CD4-positive, alpha-beta memory T cell (primary cell): ENCODE measurements at regions of chr18 and their contacts with region 1.

Region 1: DNA sequence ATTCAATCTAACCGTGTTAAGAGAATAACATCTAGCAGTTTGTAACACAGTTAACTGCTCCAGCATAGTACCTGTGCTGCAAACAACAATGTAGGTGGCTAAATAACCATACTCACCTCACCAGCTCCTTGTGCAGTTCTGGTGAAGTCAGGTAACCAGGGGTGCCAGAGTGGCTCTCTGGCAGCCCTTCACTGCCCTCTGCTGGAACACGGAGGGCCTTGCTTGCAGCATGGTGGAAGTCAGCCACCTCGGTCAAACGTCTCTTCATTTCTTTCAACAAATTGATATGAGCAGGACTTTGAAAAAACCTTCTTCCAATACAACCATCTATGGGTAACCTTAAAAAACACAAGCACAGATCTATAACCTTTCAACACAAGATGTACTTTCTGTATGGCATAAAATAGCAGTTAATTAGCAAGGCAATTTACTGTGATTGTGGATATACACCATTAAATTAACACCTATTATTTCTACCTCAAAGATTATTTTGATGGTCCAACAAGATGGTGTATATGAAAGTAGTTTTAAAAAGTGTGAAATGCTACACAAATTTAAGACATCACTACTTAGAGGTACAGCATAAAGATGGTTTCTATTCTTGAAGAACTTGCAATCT is 56.6 kb downstream of the EPG5 start:
- DNase-seq: peak; percentile 45 to 61 (median 57)
- H3K4me3 ChIP-seq: no peak overlapping the region
- H3K4me3 Mint-ChIP-seq: no peak overlapping the region
- H3K27ac ChIP-seq: no peak overlapping the region
- H3K27ac Mint-ChIP-seq: peak overlapping the region in 2 of 7 donors; percentile 12 to 70
- H3K4me1 ChIP-seq: no peaks in the 10 kb centered on the region
- H3K4me1 Mint-ChIP-seq: peaks cover 0 to 6% (median 4%) of the 10 kb centered on the region in 4 donors
- H3K27me3 ChIP-seq: no peaks in the 10 kb centered on the region
- H3K27me3 Mint-ChIP-seq: no peaks in the 10 kb centered on the region

Region 2: DNA sequence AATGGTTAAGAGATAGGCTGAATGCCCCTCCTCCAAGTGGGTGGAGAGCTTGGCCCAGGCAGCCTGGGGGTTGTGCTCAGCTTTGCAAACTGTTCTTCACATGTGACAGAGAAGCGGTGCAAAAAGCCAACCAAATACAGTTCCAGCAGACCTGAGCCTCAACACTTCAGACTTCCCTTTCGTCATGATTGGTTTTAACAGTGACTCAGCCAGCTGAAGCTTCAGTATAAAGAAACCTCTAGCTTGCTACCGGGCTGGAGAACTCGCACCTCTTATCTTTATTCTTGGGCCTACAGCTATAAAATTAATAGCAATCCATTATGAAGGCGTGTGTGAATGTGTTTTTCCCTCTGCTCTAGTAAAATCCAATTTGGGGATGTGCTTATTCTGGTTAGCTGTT is 1209.9 kb before region 1 on chr18:
- CTCF ChIA-PET with region 1: no interaction called
- POLR2A ChIA-PET with region 1: no interaction called
- intact Hi-C with region 1: no loop called
- DNase-seq: no peak
- H3K4me3 ChIP-seq: no peak overlapping the region
- H3K4me3 Mint-ChIP-seq: no peak overlapping the region
- H3K27ac ChIP-seq: no peak overlapping the region
- H3K27ac Mint-ChIP-seq: no peak overlapping the region
- H3K4me1 ChIP-seq: no peaks in the 10 kb centered on the region
- H3K4me1 Mint-ChIP-seq: peaks cover 0 to 4% (median 3%) of the 10 kb centered on the region in 4 donors
- H3K27me3 ChIP-seq: no peaks in the 10 kb centered on the region
- H3K27me3 Mint-ChIP-seq: no peaks in the 10 kb centered on the region

Region 3: DNA sequence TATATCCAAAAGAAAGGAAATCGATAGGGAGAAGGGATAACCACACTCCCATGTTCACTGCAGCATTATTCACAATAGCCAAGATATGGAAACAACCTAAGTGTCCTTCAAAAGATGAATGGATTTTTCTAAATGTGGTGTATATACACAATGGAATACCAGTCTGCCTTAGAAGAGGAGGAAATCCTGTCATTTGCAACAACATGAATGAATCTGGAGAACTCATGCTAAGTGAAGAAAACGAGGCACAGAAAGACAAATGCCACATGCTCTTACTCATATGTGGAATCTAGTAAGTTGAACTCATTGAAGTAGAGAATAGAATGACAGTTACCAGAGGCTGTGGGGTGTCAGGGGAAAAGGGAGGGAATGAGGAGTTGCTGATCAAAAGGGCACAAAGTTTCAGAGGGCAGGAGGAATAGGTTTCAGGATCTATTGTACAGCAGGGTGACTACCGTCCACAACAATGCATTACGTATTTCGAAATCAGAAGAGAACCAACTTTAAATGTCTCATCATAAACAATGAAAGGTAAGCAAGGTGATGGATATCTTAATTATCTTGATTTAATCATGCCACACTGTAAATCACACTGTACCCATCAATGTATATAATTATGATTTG is 39.0 kb before region 1 on chr18:
- CTCF ChIA-PET with region 1: no interaction called
- POLR2A ChIA-PET with region 1: no interaction called
- intact Hi-C with region 1: no loop called
- DNase-seq: no peak
- H3K4me3 ChIP-seq: no peak overlapping the region
- H3K4me3 Mint-ChIP-seq: peak overlapping the region in 1 of 8 donors; percentile 11
- H3K27ac ChIP-seq: no peak overlapping the region
- H3K27ac Mint-ChIP-seq: peak overlapping the region in 3 of 7 donors; percentile 10 to 69 (median 18)
- H3K4me1 ChIP-seq: peaks cover 24% of the 10 kb centered on the region
- H3K4me1 Mint-ChIP-seq: peaks cover 17 to 28% (median 26%) of the 10 kb centered on the region in 4 donors
- H3K27me3 ChIP-seq: no peaks in the 10 kb centered on the region
- H3K27me3 Mint-ChIP-seq: no peaks in the 10 kb centered on the region

Region 4: GRCh38 chr18:45967007-45967706 is 56.6 kb after region 1 on chr18 and contains the start of gene EPG5:
- CTCF ChIA-PET with region 1: no interaction called
- POLR2A ChIA-PET with region 1: no interaction called
- intact Hi-C with region 1: loop called (anchors 5 kb)
- DNase-seq: peak; percentile 89 to 94 (median 91)
- H3K4me3 ChIP-seq: peak within 1 kb of the TSS; percentile 89 to 94
- H3K4me3 Mint-ChIP-seq: peak within 1 kb of the TSS; percentile 95 to 100 (median 98)
- H3K27ac ChIP-seq: peak within 1 kb of the TSS; percentile 72
- H3K27ac Mint-ChIP-seq: peak within 1 kb of the TSS; percentile 89 to 98 (median 97)
- H3K4me1 ChIP-seq: peaks cover 48% of the 10 kb centered on the region
- H3K4me1 Mint-ChIP-seq: peaks cover 31 to 55% (median 42%) of the 10 kb centered on the region in 4 donors
- H3K27me3 ChIP-seq: no peaks in the 10 kb centered on the region
- H3K27me3 Mint-ChIP-seq: no peaks in the 10 kb centered on the region
- total RNA-seq, gene EPG5: 64.3 to 69.0 TPM

Region 5: DNA sequence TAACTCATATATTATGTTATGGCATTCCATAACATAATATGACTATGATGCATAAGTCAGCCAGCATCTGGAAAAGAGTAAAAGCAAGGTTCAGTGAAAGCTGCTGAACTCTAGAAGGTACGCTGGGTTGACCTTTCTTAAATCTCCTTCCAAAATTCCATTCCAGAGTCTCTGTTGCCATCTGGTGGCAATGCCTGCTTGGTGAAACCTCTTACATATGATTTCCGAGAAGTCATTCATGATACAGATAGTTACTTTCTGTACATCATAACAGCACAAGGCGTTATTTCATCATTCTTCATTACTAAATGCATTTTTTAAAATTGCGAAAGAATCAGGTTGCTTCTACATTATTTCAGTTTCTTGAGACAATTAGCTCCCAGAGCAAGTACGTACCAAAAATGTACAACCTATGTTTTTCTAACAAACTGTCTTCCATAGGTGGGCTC is 63.6 kb after region 1 on chr18:
- CTCF ChIA-PET with region 1: interaction called, 3 read pairs
- POLR2A ChIA-PET with region 1: no interaction called
- intact Hi-C with region 1: loop called (anchors 2 kb)
- DNase-seq: peak; percentile 60 to 80 (median 66)
- H3K4me3 ChIP-seq: no peak overlapping the region
- H3K4me3 Mint-ChIP-seq: peak overlapping the region in 3 of 8 donors; percentile 0 to 34 (median 1)
- H3K27ac ChIP-seq: no peak overlapping the region
- H3K27ac Mint-ChIP-seq: no peak overlapping the region
- H3K4me1 ChIP-seq: peaks cover 8% of the 10 kb centered on the region
- H3K4me1 Mint-ChIP-seq: peaks cover 8 to 18% (median 10%) of the 10 kb centered on the region in 4 donors
- H3K27me3 ChIP-seq: no peaks in the 10 kb centered on the region
- H3K27me3 Mint-ChIP-seq: no peaks in the 10 kb centered on the region